CD4-positive, alpha-beta memory T cell (primary cell): ENCODE measurements at regions of chr4 and their contacts with region 1.

Region 1: GRCh38 chr4:107183155-107183774 is 147.2 kb upstream of the DKK2 start:
- DNase-seq: peak in 4 of 5 donors; percentile 7 to 23 (median 10)
- H3K4me3 ChIP-seq: no peak overlapping the region
- H3K4me3 Mint-ChIP-seq: no peak overlapping the region
- H3K27ac ChIP-seq: no peak overlapping the region
- H3K27ac Mint-ChIP-seq: no peak overlapping the region
- H3K4me1 ChIP-seq: no peaks in the 10 kb centered on the region
- H3K4me1 Mint-ChIP-seq: no peaks in the 10 kb centered on the region
- H3K27me3 ChIP-seq: no peaks in the 10 kb centered on the region
- H3K27me3 Mint-ChIP-seq: peaks cover 0 to 4% of the 10 kb centered on the region in 2 donors

Region 2: DNA sequence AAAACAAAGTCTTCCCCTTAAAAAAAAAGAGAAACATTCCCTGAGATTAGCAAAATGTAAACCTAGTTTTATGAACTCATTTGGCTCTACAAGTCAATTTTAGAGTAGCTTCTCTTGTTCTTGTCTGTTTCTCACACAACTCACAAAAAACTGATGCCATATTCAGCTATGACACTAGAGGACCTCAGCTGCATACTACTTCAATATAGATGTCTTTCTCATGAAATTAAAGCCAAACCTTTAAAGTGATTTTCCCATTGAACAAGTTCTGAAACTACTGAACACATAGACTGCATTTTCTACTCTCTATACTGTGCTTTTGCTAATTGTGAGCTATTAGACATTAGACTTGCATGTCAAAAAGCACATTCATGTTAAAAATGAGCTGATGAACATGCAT is 917.1 kb before region 1 on chr4:
- CTCF ChIA-PET with region 1: no interaction called
- POLR2A ChIA-PET with region 1: no interaction called
- intact Hi-C with region 1: loop called (anchors 10 kb)
- DNase-seq: peak in 1 of 5 donors; percentile 0
- H3K4me3 ChIP-seq: no peak overlapping the region
- H3K4me3 Mint-ChIP-seq: no peak overlapping the region
- H3K27ac ChIP-seq: no peak overlapping the region
- H3K27ac Mint-ChIP-seq: peak overlapping the region in 2 of 7 donors; percentile 29 to 37
- H3K4me1 ChIP-seq: no peaks in the 10 kb centered on the region
- H3K4me1 Mint-ChIP-seq: peaks cover 0 to 9% (median 2%) of the 10 kb centered on the region in 4 donors
- H3K27me3 ChIP-seq: no peaks in the 10 kb centered on the region
- H3K27me3 Mint-ChIP-seq: no peaks in the 10 kb centered on the region